ENCODE measurements at regions of chr11 and their contacts with region 1.

Region 1: DNA sequence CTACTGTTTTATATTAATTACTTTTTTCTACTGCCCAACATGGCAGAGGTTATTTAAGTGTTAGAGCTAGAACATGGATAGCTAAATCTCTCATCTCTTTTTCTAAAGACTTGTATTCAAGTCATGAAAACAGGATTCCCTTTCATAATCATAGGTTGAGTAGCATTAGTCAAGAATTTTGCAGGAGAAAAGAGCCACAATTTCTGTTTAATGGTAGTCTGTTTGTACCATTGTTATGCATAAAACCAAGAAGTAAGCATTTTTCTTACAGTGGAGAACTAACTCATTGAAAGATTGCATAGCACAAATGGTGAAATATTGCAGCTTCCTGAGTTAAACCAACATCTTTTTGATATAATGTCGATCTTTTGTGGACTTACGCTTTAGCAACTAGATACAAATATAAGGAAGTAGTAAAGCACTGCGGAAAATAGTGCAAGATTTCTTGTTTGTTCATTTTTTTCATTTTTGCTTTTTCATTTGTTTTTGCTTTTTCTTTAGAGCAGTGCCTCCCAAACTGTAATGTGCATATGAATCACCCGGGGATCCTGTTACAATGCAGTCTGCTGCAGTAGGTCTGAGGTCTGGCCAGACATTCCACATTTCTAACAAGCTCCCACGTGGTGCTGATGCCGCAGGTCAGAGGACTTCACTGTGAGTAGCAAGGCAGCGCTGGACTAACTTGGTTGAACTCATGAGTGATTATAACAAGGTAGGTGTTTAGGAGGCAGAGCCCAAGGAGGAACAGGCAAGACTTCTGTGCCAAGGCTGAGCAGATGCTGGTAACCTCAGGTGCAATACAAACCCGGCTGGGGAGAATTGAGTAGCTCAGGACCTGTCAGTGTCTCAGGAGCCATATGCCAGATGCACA is 4.6 kb downstream of the ETS1 start:
- DNase-seq: peak; percentile 37
- ATAC-seq: no peak
- H3K4me3 Mint-ChIP-seq: peak overlapping the region; percentile 48
- H3K27ac Mint-ChIP-seq: peak overlapping the region; percentile 75
- H3K4me1 Mint-ChIP-seq: peaks cover 61% of the 10 kb centered on the region
- H3K27me3 Mint-ChIP-seq: peaks cover 2% of the 10 kb centered on the region

Region 2: GRCh38 chr11:127859941-127860354 is 722.8 kb before region 1 on chr11:
- CTCF ChIA-PET with region 1: no interaction called
- POLR2A ChIA-PET with region 1: no interaction called
- intact Hi-C with region 1: no loop called
- DNase-seq: no peak
- ATAC-seq: no peak
- H3K4me3 Mint-ChIP-seq: no peak overlapping the region
- H3K27ac Mint-ChIP-seq: no peak overlapping the region
- H3K4me1 Mint-ChIP-seq: no peaks in the 10 kb centered on the region
- H3K27me3 Mint-ChIP-seq: peaks cover 7% of the 10 kb centered on the region

Region 3: GRCh38 chr11:128232588-128232987 is 350.1 kb before region 1 on chr11:
- CTCF ChIA-PET with region 1: no interaction called
- POLR2A ChIA-PET with region 1: no interaction called
- intact Hi-C with region 1: loop called in 1 of 2 experiments (anchors 1 kb)
- DNase-seq: peak; percentile 81
- ATAC-seq: peak; percentile 63
- H3K4me3 Mint-ChIP-seq: no peak overlapping the region
- H3K27ac Mint-ChIP-seq: peak overlapping the region; percentile 92
- H3K4me1 Mint-ChIP-seq: peaks cover 60% of the 10 kb centered on the region
- H3K27me3 Mint-ChIP-seq: no peaks in the 10 kb centered on the region

Region 4: DNA sequence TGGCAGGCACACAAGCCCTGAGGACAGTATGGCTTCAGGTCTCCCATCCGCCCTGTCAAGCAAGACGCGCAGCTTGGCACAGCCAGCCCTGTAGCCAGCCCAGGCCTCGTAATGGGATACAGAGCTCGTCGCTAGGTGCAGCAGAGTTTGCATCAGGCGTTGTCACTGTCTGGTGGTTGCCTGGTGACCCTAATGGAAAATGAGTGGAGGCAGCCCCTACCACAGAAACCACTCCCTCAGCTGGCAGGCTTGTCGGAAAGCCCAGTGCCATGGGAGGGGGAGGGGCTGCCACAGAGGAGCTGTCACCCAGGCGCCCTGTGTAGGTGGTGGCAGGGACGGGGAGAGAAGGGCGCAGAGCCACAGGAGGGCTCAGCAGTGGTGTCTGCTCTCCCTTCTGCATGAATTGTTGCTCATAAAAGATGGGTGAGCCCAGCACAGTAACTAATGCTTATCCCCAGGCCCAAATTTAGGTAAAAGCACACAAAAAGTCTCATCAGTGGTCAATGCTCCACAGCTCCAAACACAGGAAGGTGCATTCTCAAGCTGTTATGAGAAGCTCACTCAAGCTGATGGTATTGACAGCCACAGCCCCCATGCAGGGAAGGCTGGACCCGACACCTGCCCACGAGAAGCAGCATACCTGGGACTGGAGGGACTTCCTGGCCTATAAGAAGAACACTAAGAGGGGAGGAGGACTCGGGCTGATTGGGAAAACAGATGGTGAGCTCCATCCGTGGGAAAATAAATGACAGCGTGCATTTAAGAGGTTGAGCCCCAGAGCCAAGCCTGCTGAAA is 160.0 kb before region 1 on chr11:
- CTCF ChIA-PET with region 1: no interaction called
- POLR2A ChIA-PET with region 1: no interaction called
- intact Hi-C with region 1: loop called in 1 of 2 experiments (anchors 1 kb)
- DNase-seq: peak; percentile 97
- ATAC-seq: peak; percentile 94
- H3K4me3 Mint-ChIP-seq: peak overlapping the region; percentile 36
- H3K27ac Mint-ChIP-seq: peak overlapping the region; percentile 82
- H3K4me1 Mint-ChIP-seq: peaks cover 53% of the 10 kb centered on the region
- H3K27me3 Mint-ChIP-seq: no peaks in the 10 kb centered on the region

Region 5: GRCh38 chr11:128599729-128600128 is 17.0 kb after region 1 on chr11:
- CTCF ChIA-PET with region 1: interaction called, 7 read pairs
- POLR2A ChIA-PET with region 1: no interaction called
- intact Hi-C with region 1: loop called in 1 of 2 experiments (anchors 2 kb)
- DNase-seq: no peak
- ATAC-seq: peak; percentile 63
- H3K4me3 Mint-ChIP-seq: no peak overlapping the region
- H3K27ac Mint-ChIP-seq: peak overlapping the region; percentile 59
- H3K4me1 Mint-ChIP-seq: peaks cover 65% of the 10 kb centered on the region
- H3K27me3 Mint-ChIP-seq: peaks cover 2% of the 10 kb centered on the region